Endothelial cell of umbilical vein (primary cell): ENCODE measurements at regions of chr11 and their contacts with region 1.

Region 1: GRCh38 chr11:60762851-60763691 is 6.4 kb downstream of the MS4A15 start:
- DNase-seq: no peak
- H3K4me3 ChIP-seq: no peak overlapping the region
- H3K27ac ChIP-seq: no peak overlapping the region
- H3K4me1 ChIP-seq: no peaks in the 10 kb centered on the region
- H3K27me3 ChIP-seq: peaks cover 12 to 24% of the 10 kb centered on the region in 2 experiments
- CTCF ChIP-seq: peak; percentile 6 to 17
- POLR2A ChIP-seq: no peak

Region 2: DNA sequence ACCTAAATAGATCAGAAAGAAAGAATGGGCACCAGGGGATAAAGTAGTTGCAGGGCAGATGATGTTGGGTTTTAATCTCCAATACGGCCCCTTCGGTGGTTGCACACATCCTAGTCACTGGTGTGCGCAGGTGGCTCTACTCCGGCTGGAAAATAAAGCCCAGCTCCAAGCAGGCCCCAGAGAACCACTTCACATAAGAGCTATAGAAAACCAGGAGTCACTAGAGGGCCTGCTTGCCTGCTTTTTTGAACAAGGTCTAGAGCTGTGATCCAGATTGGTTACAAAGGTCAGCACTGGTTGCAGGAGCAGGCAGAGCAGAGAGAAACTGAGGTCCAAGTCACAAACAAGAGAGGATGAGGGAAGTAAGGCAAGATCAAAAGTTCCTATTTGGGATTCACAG is 105.2 kb before region 1 on chr11:
- CTCF ChIA-PET with region 1: no interaction called
- POLR2A ChIA-PET with region 1: no interaction called
- dilution Hi-C with region 1: no loop called
- intact Hi-C with region 1: no loop called
- DNase-seq: no peak
- H3K4me3 ChIP-seq: no peak overlapping the region
- H3K27ac ChIP-seq: no peak overlapping the region
- H3K4me1 ChIP-seq: no peaks in the 10 kb centered on the region
- H3K27me3 ChIP-seq: no peaks in the 10 kb centered on the region
- CTCF ChIP-seq: no peak
- POLR2A ChIP-seq: no peak

Region 3: DNA sequence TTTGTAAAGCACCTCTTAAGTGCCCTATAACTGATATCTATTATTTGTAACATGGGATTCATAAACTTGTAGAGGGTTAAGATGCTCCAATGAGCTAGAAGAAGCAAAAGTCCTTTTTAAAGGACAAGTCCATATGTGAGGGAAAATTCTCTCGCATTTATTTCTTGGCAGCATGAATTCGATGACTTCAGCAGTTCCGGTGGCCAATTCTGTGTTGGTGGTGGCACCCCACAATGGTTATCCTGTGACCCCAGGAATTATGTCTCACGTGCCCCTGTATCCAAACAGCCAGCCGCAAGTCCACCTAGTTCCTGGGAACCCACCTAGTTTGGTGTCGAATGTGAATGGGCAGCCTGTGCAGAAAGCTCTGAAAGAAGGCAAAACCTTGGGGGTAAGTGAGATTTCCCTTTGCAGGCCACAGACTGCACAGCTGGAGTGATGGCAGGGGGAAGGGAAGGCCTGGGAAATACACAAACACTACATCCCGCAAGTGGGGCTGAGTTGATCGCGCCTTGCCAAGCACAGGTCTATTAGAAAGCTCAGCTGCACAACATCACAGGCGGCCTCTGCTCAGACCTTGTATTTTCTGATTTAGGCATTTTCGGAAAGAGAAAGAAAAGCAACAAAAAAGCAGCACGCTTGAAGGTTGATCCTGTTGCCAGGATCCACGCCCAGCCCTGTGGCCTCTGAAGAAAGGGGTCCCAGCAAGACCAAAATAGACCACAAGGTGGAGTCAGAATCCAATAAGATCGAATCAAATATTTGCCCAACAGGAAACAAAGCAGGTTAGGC is 62.2 kb before region 1 on chr11:
- CTCF ChIA-PET with region 1: interaction called, 11 read pairs
- POLR2A ChIA-PET with region 1: no interaction called
- dilution Hi-C with region 1: no loop called
- intact Hi-C with region 1: loop called (anchors 2 kb)
- DNase-seq: peak; percentile 24
- H3K4me3 ChIP-seq: no peak overlapping the region
- H3K27ac ChIP-seq: no peak overlapping the region
- H3K4me1 ChIP-seq: no peaks in the 10 kb centered on the region
- H3K27me3 ChIP-seq: peaks cover 0 to 1% of the 10 kb centered on the region in 2 experiments
- CTCF ChIP-seq: peak; percentile 46 to 49
- POLR2A ChIP-seq: no peak